Activated CD4-positive, alpha-beta T cell treated with anti-CD3 and anti-CD28 coated beads, Interleukin-2, amount 10 ng/mL, durations not matched to agents 24 days and 14 days (primary cell): ENCODE measurements at regions of chr15 and their contacts with region 1.

Region 1: DNA sequence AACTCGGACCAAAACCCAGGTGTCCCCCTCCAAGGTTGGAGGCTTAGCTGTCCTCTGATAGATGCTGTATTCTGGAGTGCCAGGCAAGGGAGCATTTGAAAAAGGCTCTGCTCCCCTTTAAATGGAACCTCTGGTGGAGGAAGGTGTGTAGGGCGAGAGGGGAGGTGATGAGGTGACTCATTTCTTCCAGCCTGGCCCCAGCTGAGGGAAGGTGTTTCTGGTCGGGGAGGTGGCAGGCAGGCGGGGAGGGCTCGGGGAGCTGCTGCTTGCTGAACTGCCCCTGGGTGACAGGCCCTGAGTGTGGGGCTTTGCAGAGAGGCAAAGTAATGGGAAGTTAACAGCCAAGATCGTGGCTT is 18.8 kb downstream of the PSTPIP1 start:
- DNase-seq: peak; percentile 94
- H3K4me3 Mint-ChIP-seq: peak overlapping the region; percentile 88
- H3K27ac Mint-ChIP-seq: peak overlapping the region; percentile 98
- H3K4me1 Mint-ChIP-seq: peaks cover 80% of the 10 kb centered on the region
- H3K27me3 Mint-ChIP-seq: peaks cover 2% of the 10 kb centered on the region

Region 2: DNA sequence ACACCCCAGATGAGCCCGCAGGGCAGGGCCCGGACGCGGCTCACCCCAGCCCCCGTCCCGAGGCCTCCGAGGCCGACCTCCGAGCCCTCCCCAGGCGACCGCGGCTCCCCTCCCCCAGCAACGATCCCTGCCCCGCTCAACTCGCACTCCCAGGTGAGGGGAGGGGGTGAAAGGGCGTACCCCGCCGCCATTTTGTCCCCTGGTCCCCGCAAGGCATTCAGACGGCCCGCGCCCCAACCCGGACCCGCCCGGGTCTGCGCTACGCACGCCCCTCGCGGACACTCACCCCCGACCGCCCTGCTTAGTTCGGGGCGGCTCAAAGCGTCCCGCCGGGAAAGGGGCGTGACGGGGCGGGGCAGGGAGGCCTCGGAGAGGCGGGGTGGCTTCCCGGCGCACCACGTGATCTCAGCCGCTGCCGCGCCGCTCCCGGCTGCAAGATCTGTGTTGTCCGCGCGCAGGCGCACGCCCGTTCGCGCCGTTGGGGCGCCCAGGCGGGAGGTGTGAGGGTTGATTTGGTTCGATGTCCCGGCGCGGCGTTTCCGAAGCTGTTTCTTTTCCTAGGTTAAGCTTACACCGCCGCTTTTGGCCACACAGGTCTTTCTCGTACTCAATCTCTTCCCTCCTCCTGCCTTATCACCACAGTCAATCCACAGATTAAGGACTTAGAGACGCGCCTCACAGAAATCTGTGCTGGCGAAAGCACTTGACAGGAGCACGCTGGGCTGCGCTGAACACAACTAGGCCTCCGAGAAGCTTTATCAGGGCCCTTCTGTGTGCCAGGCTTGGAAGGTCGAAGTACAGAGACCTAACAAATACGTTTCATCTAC is 108.5 kb before region 1 on chr15 and contains the start of gene SCAPER:
- intact Hi-C with region 1: loop called (anchors 10 kb)
- DNase-seq: peak; percentile 97
- H3K4me3 Mint-ChIP-seq: peak within 1 kb of the TSS; percentile 92
- H3K27ac Mint-ChIP-seq: peak within 1 kb of the TSS; percentile 91
- H3K4me1 Mint-ChIP-seq: peaks cover 30% of the 10 kb centered on the region
- H3K27me3 Mint-ChIP-seq: peaks cover 4% of the 10 kb centered on the region
- total RNA-seq, gene SCAPER: 24.3 and 31.0 TPM in 2 replicates

Region 3: DNA sequence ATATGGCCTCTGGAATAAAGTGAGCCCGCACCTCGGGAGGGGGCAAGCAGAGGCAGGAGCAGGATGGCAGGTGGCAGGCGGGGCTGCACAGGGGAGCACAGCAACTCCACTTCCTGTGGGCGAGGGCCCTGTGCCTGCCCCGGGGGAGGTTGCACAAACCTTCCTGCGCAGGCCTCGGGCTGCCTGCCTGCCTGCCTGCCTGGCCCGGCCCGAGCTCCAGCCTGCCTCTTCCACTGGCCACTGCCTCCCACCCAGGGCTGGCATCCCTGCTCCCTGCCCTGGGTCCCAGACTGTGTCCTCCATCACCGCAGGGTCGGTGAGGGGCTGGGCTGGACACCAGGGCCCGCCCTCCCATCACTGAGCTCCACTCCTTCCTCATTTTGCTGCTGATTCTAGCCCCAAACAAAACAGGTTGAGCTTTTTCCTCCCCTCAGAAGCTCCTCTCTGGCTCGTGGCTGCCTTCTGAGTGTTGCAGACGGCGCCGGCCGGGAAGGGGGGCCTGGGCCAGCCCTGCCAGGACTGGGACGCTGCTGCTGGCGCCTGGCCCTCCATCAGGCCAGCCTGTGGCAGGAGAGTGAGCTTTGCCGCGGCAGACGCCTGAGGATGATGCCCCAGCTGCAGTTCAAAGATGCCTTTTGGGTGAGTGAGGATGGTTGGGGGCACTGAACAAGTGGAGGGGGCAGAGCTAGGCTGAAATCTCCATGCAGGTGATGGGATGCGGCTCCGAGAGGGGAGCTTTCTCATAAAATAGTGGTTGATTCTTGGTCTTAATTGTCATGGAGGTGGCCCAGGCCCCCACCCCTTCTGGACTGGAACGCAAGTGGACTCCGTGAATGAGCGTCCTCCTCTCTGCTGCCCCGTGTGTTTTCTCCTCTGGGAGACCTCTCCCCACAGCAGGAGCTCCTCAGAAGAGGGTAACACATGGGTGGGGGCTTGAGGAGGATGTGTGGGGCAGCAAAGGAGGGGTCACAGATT is 18.5 kb before region 1 on chr15 and contains the start of gene PSTPIP1:
- intact Hi-C with region 1: loop called (anchors 1 kb)
- DNase-seq: peak; percentile 90
- H3K4me3 Mint-ChIP-seq: peak within 1 kb of the TSS; percentile 98
- H3K27ac Mint-ChIP-seq: peak within 1 kb of the TSS; percentile 96
- H3K4me1 Mint-ChIP-seq: peaks cover 62% of the 10 kb centered on the region
- H3K27me3 Mint-ChIP-seq: no peaks in the 10 kb centered on the region
- total RNA-seq, gene PSTPIP1: 182 and 186 TPM in 2 replicates

Region 4: DNA sequence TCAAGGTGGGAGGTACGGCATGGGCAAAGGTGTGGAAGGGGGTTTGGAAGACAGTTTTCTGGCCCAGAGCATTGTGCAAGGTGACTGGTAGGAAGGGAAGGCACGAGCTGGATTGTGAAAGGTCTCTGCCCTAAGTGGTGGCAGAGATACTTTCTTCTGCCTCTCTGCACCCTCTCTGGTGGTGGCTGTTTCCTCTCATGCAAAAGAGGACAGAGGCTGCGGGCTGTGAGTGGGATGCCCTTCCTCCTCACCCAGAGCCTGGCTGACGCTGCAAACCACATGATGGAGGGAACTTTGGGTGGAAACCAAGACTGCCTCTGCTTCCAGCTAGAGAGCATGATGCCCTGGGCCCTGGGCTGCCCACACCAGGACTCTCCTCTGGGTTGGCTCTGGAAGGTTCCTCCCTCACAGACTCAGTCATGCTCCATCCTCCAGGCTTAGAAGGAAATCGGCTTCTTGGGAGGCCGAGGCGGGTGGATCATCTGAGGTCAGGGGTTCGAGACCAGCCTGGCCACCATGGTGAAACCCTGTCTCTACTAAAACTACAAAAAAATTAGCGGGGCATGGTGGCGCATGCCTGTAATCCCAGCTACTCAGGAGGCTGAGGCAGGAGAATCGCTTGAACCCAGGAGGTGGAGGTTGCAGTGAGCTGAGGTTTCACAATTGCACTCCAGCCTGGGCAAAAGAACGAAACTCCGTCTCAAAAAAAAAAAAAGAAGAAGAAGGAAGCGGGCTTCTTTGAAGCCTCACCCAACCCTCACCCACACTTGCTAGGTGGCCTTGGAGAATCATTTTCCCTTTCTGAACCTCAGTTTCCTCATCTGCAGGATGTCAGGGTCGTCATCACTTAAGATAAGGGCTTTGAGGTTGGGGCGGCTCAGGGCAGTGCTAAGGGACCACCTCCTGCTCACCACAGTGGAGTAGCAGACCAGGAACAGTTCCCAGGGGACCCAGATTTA is 10.5 kb before region 1 on chr15:
- intact Hi-C with region 1: loop called (anchors 1 kb)
- DNase-seq: peak; percentile 92
- H3K4me3 Mint-ChIP-seq: peak overlapping the region; percentile 80
- H3K27ac Mint-ChIP-seq: peak overlapping the region; percentile 92
- H3K4me1 Mint-ChIP-seq: peaks cover 81% of the 10 kb centered on the region
- H3K27me3 Mint-ChIP-seq: no peaks in the 10 kb centered on the region

Region 5: GRCh38 chr15:77024271-77025082 is 10.7 kb after region 1 on chr15:
- intact Hi-C with region 1: loop called (anchors 1 kb)
- DNase-seq: peak; percentile 91
- H3K4me3 Mint-ChIP-seq: no peak overlapping the region
- H3K27ac Mint-ChIP-seq: peak overlapping the region; percentile 98
- H3K4me1 Mint-ChIP-seq: peaks cover 52% of the 10 kb centered on the region
- H3K27me3 Mint-ChIP-seq: no peaks in the 10 kb centered on the region